ENCODE measurements at regions of chr14 and their contacts with region 1.

Region 1: GRCh38 chr14:49633640-49634546 is 1.2 kb downstream of the DNAAF2 start:
- DNase-seq: peak; percentile 95
- H3K4me3 Mint-ChIP-seq: peak overlapping the region; percentile 88
- H3K27ac Mint-ChIP-seq: peak overlapping the region; percentile 81
- H3K4me1 Mint-ChIP-seq: peaks cover 45% of the 10 kb centered on the region
- H3K27me3 Mint-ChIP-seq: no peaks in the 10 kb centered on the region

Region 2: DNA sequence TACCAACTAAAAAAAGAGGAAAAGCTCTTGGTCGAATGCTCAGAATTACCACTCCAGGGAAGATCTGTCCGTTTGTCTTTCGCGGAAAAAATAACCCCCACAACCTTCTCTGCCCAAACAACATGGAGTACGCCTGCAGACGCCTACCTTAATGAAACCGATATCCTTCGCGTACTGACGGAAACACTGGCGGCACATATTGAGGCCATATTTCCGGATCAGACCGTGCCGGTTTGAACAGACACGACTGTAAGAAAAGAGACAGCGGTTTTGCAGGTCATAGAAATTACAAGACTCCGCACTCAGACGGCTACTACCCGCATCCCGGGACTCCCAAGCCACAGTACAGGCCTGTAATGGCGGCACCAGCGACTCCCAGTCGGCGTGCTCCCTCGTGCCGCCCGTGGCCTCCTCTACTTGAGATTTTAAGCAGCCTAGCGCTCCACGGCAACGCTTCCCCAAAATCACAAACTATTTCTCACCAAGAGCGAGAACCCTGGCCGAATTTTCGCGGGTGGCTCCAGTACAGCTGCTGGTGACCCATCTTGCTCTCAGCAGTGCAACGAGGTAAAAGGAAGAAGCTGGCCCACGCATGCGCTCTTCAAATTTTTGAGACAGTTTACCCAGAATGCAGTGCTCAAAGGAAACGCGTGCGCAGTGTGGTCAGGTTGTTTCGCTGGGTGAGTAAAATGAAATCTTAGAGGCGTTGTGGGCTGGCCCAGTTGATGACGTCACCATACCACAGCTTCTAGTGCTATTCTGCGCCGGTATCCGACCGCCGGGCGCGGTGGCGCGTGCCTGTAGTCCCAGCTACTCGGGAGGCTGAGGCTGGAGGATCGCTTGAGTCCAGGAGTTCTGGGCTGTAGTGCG is 47.9 kb before region 1 on chr14 and contains the start of gene RPS29:
- CTCF ChIA-PET with region 1: interaction called, 31 read pairs
- POLR2A ChIA-PET with region 1: interaction called, 45 read pairs
- DNase-seq: peak; percentile 99
- H3K4me3 Mint-ChIP-seq: peak within 1 kb of the TSS; percentile 85
- H3K27ac Mint-ChIP-seq: peak within 1 kb of the TSS; percentile 99
- H3K4me1 Mint-ChIP-seq: peaks cover 50% of the 10 kb centered on the region
- H3K27me3 Mint-ChIP-seq: no peaks in the 10 kb centered on the region
- total RNA-seq, gene RPS29: 1,659 to 1,700 TPM

Region 3: DNA sequence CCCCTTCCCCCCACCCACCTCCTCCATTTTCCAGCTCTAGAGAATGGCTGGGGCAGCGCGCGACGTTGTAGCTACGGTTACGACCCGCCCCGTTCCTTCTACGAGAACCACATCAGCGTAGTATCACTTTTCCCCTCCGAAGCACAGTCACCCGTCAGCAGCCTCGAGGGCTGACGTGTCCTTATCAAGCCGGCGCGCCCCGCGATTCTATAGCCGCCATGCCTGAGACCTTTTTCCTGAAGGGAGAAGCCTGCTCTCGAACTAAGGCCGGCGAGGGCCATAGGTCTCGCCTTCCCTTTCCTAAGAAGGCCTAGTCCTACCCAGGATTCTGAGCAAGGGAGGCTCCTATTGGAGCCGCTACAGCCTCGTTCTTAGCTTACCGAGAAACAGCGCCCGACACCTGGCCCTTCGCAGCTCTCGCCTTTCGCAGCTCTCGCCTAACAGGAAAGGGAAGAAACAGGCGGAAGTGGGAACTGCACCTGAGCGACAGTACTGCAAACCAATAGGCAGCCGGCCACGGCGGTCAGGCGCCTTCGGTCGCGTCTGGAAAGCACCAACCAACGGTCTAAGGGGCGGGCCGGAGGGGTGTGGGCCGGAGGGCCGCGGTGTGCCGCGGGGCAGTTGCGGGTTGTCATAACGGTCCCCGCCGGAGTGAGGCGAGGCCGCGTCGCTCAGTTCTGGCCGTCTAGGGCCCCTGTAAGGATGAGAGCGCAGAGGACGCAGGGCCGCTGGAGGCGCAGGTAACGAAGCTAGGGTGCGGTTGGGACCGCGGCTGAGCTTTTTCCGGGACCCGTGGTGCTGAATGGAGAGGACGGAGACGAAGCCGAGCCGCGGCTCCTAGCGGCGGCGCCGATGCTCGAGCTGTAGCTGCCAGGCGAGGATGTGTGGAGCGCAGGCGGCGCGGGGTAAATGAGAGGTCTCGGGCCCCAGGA is 13.4 kb before region 1 on chr14 and contains the starts of genes MGAT2 and RPL36AL:
- CTCF ChIA-PET with region 1: interaction called, 156 read pairs
- POLR2A ChIA-PET with region 1: interaction called, 293 read pairs
- DNase-seq: peak; percentile 96
- H3K4me3 Mint-ChIP-seq: peak within 1 kb of the TSS; percentile 94
- H3K27ac Mint-ChIP-seq: peak within 1 kb of the TSS; percentile 94
- H3K4me1 Mint-ChIP-seq: peaks cover 50% of the 10 kb centered on the region
- H3K27me3 Mint-ChIP-seq: no peaks in the 10 kb centered on the region
- total RNA-seq, gene MGAT2: 82.7 to 86.5 TPM
- total RNA-seq, gene RPL36AL: 320 to 330 TPM

Region 4: DNA sequence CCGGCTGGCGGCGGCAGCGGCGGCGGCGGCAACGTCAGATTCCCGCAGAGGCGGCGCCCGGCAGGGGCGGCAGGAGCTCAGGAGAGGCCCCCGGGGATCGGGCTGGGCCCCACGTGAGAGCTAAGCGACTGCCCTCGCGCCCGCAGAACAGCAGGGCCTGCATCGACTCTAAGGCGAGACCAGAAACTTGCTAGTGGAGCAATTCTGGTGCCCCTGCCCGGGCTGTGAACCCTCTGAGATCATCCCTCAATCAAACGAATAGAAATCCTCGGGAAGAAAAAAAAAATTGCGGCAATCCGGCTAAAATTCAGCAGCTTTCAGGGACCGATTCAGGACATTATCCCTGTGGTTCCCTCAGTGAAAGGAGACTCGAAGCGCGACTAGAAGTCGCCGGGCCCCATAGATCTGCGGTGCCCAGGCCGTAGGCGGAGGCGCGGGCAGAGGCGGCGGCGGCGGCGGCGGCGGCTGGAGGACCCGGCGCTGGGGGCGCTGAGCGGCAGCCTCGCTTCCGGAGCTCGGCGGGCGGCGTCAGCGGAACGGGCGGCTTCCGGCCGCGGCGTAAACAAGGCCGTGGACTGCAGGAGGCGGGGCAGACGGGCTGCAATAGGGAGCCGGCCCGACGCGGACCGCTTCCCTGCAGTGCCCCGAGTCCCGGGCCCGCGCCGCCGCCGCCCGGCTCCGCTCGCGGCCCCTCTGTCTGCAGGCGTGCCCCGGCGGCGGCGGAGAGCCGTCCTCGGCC is 133.8 kb after region 1 on chr14 and contains the start of gene KLHDC2:
- CTCF ChIA-PET with region 1: interaction called, 45 read pairs
- POLR2A ChIA-PET with region 1: interaction called, 94 read pairs
- DNase-seq: peak; percentile 92
- H3K4me3 Mint-ChIP-seq: peak within 1 kb of the TSS; percentile 98
- H3K27ac Mint-ChIP-seq: peak within 1 kb of the TSS; percentile 98
- H3K4me1 Mint-ChIP-seq: peaks cover 37% of the 10 kb centered on the region
- H3K27me3 Mint-ChIP-seq: no peaks in the 10 kb centered on the region
- total RNA-seq, gene KLHDC2: 34.3 to 34.7 TPM

Region 5: DNA sequence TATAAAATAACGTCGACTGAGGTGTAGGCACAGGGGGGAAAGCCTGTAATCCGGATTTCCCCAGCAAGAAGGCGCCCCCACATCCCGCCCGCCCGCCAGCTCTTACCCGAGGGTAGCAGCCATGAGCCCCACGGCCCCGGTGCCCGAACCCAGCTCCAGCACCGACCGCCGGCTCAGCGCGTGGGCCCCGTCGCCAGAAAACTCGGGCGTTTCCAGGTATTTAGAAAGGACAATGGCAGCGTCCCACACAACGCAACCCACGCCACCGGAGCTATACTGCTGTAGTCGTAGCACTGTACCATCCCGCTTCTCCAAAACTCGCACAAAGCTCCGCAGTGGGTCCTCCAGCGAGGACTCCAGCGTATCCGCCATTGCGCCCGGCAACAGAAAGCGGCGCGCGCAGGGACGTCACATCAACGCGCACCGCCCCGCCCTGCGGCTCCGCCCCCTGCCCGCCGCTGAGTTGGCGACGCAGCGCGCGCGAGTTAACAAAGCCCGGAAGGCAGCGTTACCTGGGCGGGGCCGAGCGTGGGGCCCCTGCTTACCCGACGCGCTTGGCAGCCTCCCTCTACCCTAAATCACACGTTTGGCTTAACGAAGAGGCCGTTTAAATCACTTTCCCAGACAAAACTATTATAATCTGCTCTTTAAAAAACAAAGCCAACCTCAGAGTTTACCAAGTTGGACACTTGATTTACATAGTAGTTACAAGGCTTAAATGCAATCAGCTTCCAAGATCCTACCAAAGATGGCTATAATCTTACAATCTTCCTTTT is 482.5 kb after region 1 on chr14 and contains the start of gene VCPKMT:
- CTCF ChIA-PET with region 1: interaction called, 6 read pairs
- POLR2A ChIA-PET with region 1: interaction called, 12 read pairs
- DNase-seq: peak; percentile 97
- H3K4me3 Mint-ChIP-seq: peak within 1 kb of the TSS; percentile 99
- H3K27ac Mint-ChIP-seq: peak within 1 kb of the TSS; percentile 97
- H3K4me1 Mint-ChIP-seq: peaks cover 40% of the 10 kb centered on the region
- H3K27me3 Mint-ChIP-seq: no peaks in the 10 kb centered on the region
- total RNA-seq, gene VCPKMT: 7.5 to 9.5 TPM